ENCODE measurements at regions of chr7 and their contacts with region 1.

Region 1: GRCh38 chr7:121744319-121744718 is 128.6 kb upstream of the PTPRZ1 start:
- DNase-seq: peak; percentile 25
- H3K4me3 Mint-ChIP-seq: peak overlapping the region; percentile 67
- H3K27ac Mint-ChIP-seq: peak overlapping the region; percentile 99
- H3K4me1 Mint-ChIP-seq: peaks cover 38% of the 10 kb centered on the region
- H3K27me3 Mint-ChIP-seq: no peaks in the 10 kb centered on the region
- CTCF ChIP-seq: no peak

Region 2: DNA sequence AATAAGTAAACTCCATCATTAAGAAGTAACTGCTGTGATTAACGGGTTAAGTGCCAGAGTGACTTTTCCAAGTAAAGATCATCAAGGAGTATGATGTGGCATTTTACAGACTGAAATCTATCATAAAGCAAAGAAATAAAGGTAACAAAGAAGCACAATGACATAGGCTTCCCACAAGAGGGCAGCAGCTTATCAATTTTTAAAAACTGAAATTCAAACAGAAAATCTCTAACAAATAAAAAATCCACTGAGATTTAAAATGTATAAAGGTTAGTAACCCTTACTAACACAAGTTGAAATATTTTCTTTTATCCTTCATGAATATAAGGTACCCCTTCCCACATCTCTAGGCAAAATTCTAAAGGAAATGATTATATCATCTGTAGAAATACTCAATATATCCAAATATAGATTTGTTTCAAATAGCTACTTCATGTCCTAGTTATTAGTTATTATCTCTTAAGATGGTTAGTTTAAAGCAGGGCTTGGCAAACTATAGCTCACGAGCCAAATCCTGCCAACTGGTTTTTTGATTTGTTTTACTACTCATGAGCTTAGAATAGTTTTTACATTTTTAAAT is 377.4 kb before region 1 on chr7:
- CTCF ChIA-PET with region 1: no interaction called
- intact Hi-C with region 1: loop called (anchors 10 kb)
- DNase-seq: peak; percentile 15
- H3K4me3 Mint-ChIP-seq: no peak overlapping the region
- H3K27ac Mint-ChIP-seq: no peak overlapping the region
- H3K4me1 Mint-ChIP-seq: peaks cover 28% of the 10 kb centered on the region
- H3K27me3 Mint-ChIP-seq: no peaks in the 10 kb centered on the region
- CTCF ChIP-seq: peak; percentile 39

Region 3: DNA sequence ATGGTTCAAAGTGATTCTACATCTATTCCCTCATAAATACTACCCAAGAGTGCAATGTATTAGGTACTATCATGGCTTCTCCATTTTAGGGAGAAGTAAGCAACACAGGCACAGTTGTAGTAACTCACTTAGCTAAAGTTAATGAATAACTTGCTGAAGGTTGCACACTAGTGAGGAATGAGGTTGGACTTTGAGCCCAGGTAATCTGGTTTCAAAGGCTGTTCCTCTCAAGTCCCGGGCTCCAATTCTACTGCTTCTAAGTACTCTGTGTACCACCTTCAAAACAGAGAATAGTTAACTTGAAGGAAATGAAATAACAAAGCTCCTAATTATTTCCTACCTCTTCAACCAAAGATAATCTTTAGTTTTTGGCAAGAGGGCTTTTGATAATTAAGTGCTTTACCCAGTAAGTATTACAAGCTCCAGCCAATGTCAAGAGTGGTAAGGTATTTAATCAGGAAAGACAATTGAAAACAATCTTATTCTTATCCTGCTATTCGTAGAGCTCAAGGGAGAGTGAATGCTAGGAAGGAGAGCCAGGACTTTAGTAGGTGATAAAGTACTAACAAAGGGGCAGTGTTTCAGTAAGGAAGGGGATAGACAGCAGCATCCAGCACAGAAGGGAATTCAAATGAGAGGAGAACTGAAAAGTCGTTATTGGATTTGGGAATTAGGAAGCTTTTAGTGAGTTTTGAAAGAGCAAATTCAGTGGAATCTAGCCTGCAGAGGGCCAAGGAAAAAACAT is 29.6 kb before region 1 on chr7:
- CTCF ChIA-PET with region 1: interaction called, 5 read pairs
- intact Hi-C with region 1: loop called (anchors 1 kb)
- DNase-seq: peak; percentile 67
- H3K4me3 Mint-ChIP-seq: peak overlapping the region; percentile 64
- H3K27ac Mint-ChIP-seq: peak overlapping the region; percentile 91
- H3K4me1 Mint-ChIP-seq: peaks cover 27% of the 10 kb centered on the region
- H3K27me3 Mint-ChIP-seq: no peaks in the 10 kb centered on the region
- CTCF ChIP-seq: no peak

Region 4: DNA sequence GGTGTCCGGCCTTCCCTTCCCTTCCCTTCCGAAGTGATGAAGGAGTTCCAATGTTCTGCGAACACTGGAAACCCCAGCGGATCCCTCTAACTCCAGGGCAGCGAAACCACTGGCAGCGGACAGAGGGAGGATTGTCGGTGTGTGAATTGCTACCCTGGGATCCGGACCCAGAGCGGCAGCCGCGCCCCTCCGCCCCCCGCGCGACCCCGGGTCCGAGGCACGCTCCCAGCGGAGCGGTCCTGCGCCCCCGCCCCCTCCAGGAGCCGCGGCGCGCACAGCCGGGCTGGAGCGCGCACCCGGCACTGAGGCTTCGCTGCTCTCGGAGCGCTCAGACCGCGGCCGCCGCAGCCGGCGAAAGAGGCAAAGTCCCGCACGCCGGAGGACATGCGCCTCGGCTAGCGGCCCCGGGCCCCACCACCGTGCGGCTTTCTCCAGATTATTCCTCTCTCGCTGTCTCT is 128.5 kb after region 1 on chr7 and contains the start of gene PTPRZ1:
- CTCF ChIA-PET with region 1: no interaction called
- intact Hi-C with region 1: loop called (anchors 10 kb)
- DNase-seq: peak; percentile 49
- H3K4me3 Mint-ChIP-seq: peak within 1 kb of the TSS; percentile 82
- H3K27ac Mint-ChIP-seq: peak within 1 kb of the TSS; percentile 9
- H3K4me1 Mint-ChIP-seq: no peaks in the 10 kb centered on the region
- H3K27me3 Mint-ChIP-seq: peaks cover 14% of the 10 kb centered on the region
- CTCF ChIP-seq: no peak
- total RNA-seq, gene PTPRZ1: 4.9 and 5.8 TPM in 2 replicates